Heart left ventricle (tissue), 16 donors: ENCODE measurements at regions of chr19 and their contacts with region 1.

Region 1: GRCh38 chr19:46542428-46543230 is 47.0 kb upstream of the PNMA8B start:
- DNase-seq: peak; percentile 81 to 93 (median 87)
- ATAC-seq: peak; percentile 52 to 88 (median 84)
- H3K4me3 ChIP-seq: no peak overlapping the region
- H3K27ac ChIP-seq: no peak overlapping the region
- H3K4me1 ChIP-seq: peaks cover 0 to 12% (median 0%) of the 10 kb centered on the region in 12 donors
- H3K27me3 ChIP-seq: no peaks in the 10 kb centered on the region
- CTCF ChIP-seq: peak; percentile 86 to 96 (median 92)
- POLR2A ChIP-seq: no peak

Region 2: GRCh38 chr19:46529622-46530462 is 12.8 kb before region 1 on chr19:
- intact Hi-C with region 1: loop called in 3 of 10 experiments (anchors 1 kb)
- DNase-seq: peak; percentile 56 to 82 (median 61)
- ATAC-seq: peak; percentile 39 to 82 (median 73)
- H3K4me3 ChIP-seq: no peak overlapping the region
- H3K27ac ChIP-seq: peak overlapping the region in 1 of 12 donors; percentile 58
- H3K4me1 ChIP-seq: peaks cover 0 to 20% (median 5%) of the 10 kb centered on the region in 12 donors
- H3K27me3 ChIP-seq: peaks cover 0 to 15% (median 0%) of the 10 kb centered on the region in 9 donors
- CTCF ChIP-seq: peak; percentile 86 to 96 (median 92)
- POLR2A ChIP-seq: no peak

Region 3: DNA sequence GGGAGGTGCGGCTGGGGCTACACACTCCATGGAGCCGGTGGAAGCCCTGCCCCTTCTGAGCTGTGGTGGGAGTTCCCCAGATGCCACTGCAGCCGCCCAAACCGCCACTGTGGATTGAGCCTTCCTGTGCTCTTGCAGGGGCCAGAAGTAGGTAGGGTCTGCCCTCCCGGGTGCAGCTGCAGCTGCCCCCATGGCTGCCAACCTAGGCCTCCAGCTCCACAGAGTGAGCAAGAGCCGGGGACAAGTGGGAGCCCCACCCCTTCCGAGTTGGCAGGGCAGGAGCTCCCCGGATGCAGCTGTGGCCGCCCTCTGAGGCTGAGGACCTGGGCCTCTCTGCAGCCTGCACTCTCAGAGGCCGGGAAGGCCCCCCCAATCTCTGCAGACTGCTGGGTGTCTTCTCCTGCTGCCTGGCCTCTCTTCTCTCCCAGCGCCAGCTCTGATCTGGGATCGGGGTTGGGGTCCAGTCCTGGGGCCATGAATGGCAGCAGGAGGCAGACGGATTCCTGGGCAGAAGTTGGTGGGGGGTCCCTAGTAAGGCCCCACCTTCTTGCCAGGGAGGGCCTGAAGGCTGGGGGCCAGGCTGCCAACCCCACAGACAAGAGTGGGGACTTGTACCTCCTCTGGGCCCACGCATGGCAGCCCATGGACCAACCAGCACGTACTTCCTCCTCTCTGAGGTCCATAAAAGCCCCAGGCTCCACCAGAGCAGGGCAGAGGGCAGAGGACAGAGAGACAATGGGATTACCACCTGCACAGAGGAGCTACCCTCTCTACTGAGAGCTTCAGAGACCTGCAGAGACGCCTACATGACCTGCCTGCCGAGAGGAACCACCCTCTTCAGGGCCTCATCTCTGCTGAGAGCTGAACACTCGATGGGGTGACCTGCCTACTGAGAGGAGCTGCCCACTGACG is 279.1 kb after region 1 on chr19:
- intact Hi-C with region 1: no loop called
- DNase-seq: peak in 2 of 5 donors; percentile 49 to 73
- ATAC-seq: peak in 3 of 4 donors; percentile 33 to 62 (median 45)
- H3K4me3 ChIP-seq: peak overlapping the region in 1 of 12 donors; percentile 1
- H3K27ac ChIP-seq: peak overlapping the region in 1 of 12 donors; percentile 57
- H3K4me1 ChIP-seq: peaks cover 0 to 37% (median 0%) of the 10 kb centered on the region in 12 donors
- H3K27me3 ChIP-seq: no peaks in the 10 kb centered on the region
- CTCF ChIP-seq: no peak
- POLR2A ChIP-seq: no peak